ENCODE measurements at regions of chr2 and their contacts with region 1.

Region 1: DNA sequence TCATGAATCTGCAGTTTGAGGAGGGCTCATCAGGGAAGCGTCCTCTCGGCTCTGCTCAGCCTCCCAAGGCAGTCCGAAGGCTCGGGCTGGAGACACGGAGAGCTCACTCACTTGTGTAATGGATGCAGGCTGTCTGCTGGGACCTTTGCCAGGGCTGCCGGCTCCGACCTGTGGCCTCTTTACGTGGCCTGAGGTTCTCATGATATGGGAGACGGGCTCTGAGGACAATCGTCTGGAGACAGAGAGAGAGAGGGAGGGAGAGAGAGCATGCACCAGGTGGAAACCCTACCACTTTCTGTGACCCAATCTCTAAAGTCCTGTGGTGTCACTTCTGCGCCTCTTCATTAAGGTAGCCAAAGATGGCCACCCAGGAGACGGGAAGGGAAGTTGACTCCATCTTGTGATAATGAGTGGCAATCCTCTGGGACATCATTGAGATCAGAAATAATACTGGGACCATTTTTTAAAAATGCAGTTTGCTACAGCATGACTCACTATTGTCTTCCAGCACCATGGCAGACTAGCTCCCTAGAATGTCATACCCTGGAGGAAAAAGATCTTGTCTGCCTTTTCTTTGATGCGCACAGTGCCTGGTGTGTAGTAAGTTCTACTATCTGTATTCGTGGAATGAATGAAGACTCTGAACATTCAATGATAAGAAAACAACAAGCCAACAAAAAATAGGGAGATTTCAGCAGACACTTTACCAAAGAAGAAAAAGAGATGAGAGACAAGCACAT is 60.2 kb downstream of the CD8B2 start:
- DNase-seq: no peak
- H3K4me3 ChIP-seq: no peak overlapping the region
- H3K27ac ChIP-seq: no peak overlapping the region
- H3K4me1 ChIP-seq: no peaks in the 10 kb centered on the region
- H3K27me3 ChIP-seq: no peaks in the 10 kb centered on the region
- CTCF ChIP-seq: no peak
- POLR2A ChIP-seq: no peak

Region 2: GRCh38 chr2:106104332-106105062 is 442.8 kb before region 1 on chr2:
- intact Hi-C with region 1: loop called (anchors 5 kb)
- DNase-seq: peak in 1 of 2 donors; percentile 78
- H3K4me3 ChIP-seq: no peak overlapping the region
- H3K27ac ChIP-seq: no peak overlapping the region
- H3K4me1 ChIP-seq: no peaks in the 10 kb centered on the region
- H3K27me3 ChIP-seq: no peaks in the 10 kb centered on the region
- CTCF ChIP-seq: peak; percentile 77 to 93 (median 92)
- POLR2A ChIP-seq: no peak

Region 3: GRCh38 chr2:106269591-106270291 is 277.6 kb before region 1 on chr2:
- intact Hi-C with region 1: no loop called
- DNase-seq: no peak
- H3K4me3 ChIP-seq: peak overlapping the region; percentile 36 to 40
- H3K27ac ChIP-seq: no peak overlapping the region
- H3K4me1 ChIP-seq: peaks cover 11% of the 10 kb centered on the region
- H3K27me3 ChIP-seq: no peaks in the 10 kb centered on the region
- CTCF ChIP-seq: no peak
- POLR2A ChIP-seq: no peak

Region 4: GRCh38 chr2:107025869-107026380 is 478.6 kb after region 1 on chr2:
- intact Hi-C with region 1: no loop called
- DNase-seq: no peak
- H3K4me3 ChIP-seq: no peak overlapping the region
- H3K27ac ChIP-seq: no peak overlapping the region
- H3K4me1 ChIP-seq: no peaks in the 10 kb centered on the region
- H3K27me3 ChIP-seq: no peaks in the 10 kb centered on the region
- CTCF ChIP-seq: no peak
- POLR2A ChIP-seq: no peak